ENCODE measurements at regions of chr6 and their contacts with region 1.

Region 1: GRCh38 chr6:39724787-39725631 is at the start of gene KIF6:
- DNase-seq: peak; percentile 92
- ATAC-seq: peak; percentile 100
- H3K4me3 Mint-ChIP-seq: peak within 1 kb of the TSS; percentile 90
- H3K27ac Mint-ChIP-seq: peak within 1 kb of the TSS; percentile 60
- H3K4me1 Mint-ChIP-seq: peaks cover 3% of the 10 kb centered on the region
- H3K27me3 Mint-ChIP-seq: peaks cover 5% of the 10 kb centered on the region
- total RNA-seq, gene KIF6: 0.43 to 0.49 TPM

Region 2: DNA sequence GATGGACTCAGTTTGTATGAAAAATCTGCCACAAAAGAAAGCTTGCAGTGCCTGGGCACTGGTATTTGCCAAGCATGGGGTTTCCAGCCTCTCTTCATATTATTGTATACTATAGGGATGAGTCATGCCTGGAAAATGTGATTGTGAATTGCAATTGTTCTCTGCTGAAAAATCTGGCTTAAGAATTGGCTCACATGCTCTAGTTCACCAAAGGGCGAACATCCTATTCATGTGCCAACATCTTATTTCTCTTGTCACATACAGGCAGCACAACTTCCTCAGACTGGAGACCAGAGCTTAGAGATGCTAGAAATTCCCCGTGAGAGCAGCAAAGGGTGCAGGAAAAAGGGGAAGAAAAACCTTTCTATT is 298.9 kb before region 1 on chr6:
- CTCF ChIA-PET with region 1: no interaction called
- POLR2A ChIA-PET with region 1: no interaction called
- intact Hi-C with region 1: loop called in 1 of 2 experiments (anchors 5 kb)
- DNase-seq: peak; percentile 22
- ATAC-seq: peak; percentile 66
- H3K4me3 Mint-ChIP-seq: no peak overlapping the region
- H3K27ac Mint-ChIP-seq: no peak overlapping the region
- H3K4me1 Mint-ChIP-seq: peaks cover 5% of the 10 kb centered on the region
- H3K27me3 Mint-ChIP-seq: peaks cover 3% of the 10 kb centered on the region

Region 3: GRCh38 chr6:39934131-39934757 is 209.2 kb after region 1 on chr6 and contains the start of gene MOCS1:
- CTCF ChIA-PET with region 1: no interaction called
- POLR2A ChIA-PET with region 1: no interaction called
- intact Hi-C with region 1: loop called in 1 of 2 experiments (anchors 5 kb)
- DNase-seq: peak; percentile 86
- ATAC-seq: peak; percentile 93
- H3K4me3 Mint-ChIP-seq: peak within 1 kb of the TSS; percentile 82
- H3K27ac Mint-ChIP-seq: peak within 1 kb of the TSS; percentile 86
- H3K4me1 Mint-ChIP-seq: peaks cover 23% of the 10 kb centered on the region
- H3K27me3 Mint-ChIP-seq: peaks cover 3% of the 10 kb centered on the region
- total RNA-seq, gene MOCS1: 6.2 to 6.4 TPM

Region 4: GRCh38 chr6:40274058-40274457 is 549.0 kb after region 1 on chr6:
- CTCF ChIA-PET with region 1: no interaction called
- POLR2A ChIA-PET with region 1: no interaction called
- intact Hi-C with region 1: no loop called
- DNase-seq: no peak
- ATAC-seq: no peak
- H3K4me3 Mint-ChIP-seq: no peak overlapping the region
- H3K27ac Mint-ChIP-seq: no peak overlapping the region
- H3K4me1 Mint-ChIP-seq: no peaks in the 10 kb centered on the region
- H3K27me3 Mint-ChIP-seq: peaks cover 2% of the 10 kb centered on the region